Body of pancreas (tissue), 4 donors: ENCODE measurements at regions of chr5 and their contacts with region 1.

Region 1: GRCh38 chr5:157858527-157859226 is at the start of gene CLINT1:
- DNase-seq: peak; percentile 89 to 93 (median 92)
- ATAC-seq: peak; percentile 96
- H3K4me3 ChIP-seq: peak within 1 kb of the TSS; percentile 65 to 82
- H3K27ac ChIP-seq: peak within 1 kb of the TSS; percentile 85 to 91 (median 88)
- H3K4me1 ChIP-seq: peaks cover 35% of the 10 kb centered on the region
- H3K27me3 ChIP-seq: no peaks in the 10 kb centered on the region
- CTCF ChIP-seq: peak in 2 of 7 experiments; percentile 13 to 20
- POLR2A ChIP-seq: peak; percentile 53 to 83 (median 77)
- total RNA-seq, gene CLINT1: 59.0 to 75.8 TPM

Region 2: GRCh38 chr5:157924931-157925729 is 66.5 kb after region 1 on chr5:
- intact Hi-C with region 1: loop called (anchors 10 kb)
- DNase-seq: no peak
- ATAC-seq: no peak
- H3K4me3 ChIP-seq: no peak overlapping the region
- H3K27ac ChIP-seq: no peak overlapping the region
- H3K4me1 ChIP-seq: peaks cover 1% of the 10 kb centered on the region
- H3K27me3 ChIP-seq: no peaks in the 10 kb centered on the region
- CTCF ChIP-seq: no peak
- POLR2A ChIP-seq: no peak